ENCODE measurements at regions of chr7 and their contacts with region 1.

Region 1: GRCh38 chr7:83517035-83517700 is 131.8 kb downstream of the SEMA3E start:
- DNase-seq: no peak
- H3K4me3 ChIP-seq: no peak overlapping the region
- H3K27ac ChIP-seq: no peak overlapping the region
- H3K4me1 ChIP-seq: no peaks in the 10 kb centered on the region
- H3K27me3 ChIP-seq: no peaks in the 10 kb centered on the region
- CTCF ChIP-seq: no peak
- POLR2A ChIP-seq: no peak

Region 2: GRCh38 chr7:83655951-83656556 is 138.9 kb after region 1 on chr7:
- CTCF ChIA-PET with region 1: no interaction called
- POLR2A ChIA-PET with region 1: no interaction called
- dilution Hi-C with region 1: no loop called
- intact Hi-C with region 1: loop called (anchors 2 kb)
- DNase-seq: peak; percentile 64
- H3K4me3 ChIP-seq: no peak overlapping the region
- H3K27ac ChIP-seq: no peak overlapping the region
- H3K4me1 ChIP-seq: no peaks in the 10 kb centered on the region
- H3K27me3 ChIP-seq: peaks cover 10 to 14% of the 10 kb centered on the region in 2 experiments
- CTCF ChIP-seq: peak; percentile 52 to 64
- POLR2A ChIP-seq: no peak

Region 3: DNA sequence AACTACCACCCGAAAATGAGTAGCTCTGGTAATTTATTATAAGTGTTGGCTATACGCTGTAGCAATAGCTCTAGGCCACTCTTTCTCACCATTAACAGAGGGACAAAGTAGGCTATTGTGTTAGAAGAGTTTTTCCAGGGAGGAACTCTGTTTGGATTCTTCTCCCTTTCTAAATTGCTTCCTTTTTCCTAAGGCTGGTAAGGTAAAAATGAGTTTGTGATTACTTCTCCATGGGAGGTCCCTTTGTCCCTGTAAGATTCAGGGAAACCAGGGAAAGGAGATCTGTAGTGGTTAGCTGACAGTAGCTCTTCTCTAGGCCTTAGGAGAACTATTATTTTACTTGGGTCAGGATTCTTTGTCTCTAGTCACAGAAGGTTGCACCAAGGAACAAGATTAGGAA is 155.0 kb after region 1 on chr7:
- CTCF ChIA-PET with region 1: no interaction called
- POLR2A ChIA-PET with region 1: no interaction called
- dilution Hi-C with region 1: no loop called
- intact Hi-C with region 1: no loop called
- DNase-seq: no peak
- H3K4me3 ChIP-seq: no peak overlapping the region
- H3K27ac ChIP-seq: no peak overlapping the region
- H3K4me1 ChIP-seq: no peaks in the 10 kb centered on the region
- H3K27me3 ChIP-seq: no peaks in the 10 kb centered on the region
- CTCF ChIP-seq: no peak
- POLR2A ChIP-seq: no peak

Measured in endothelial cell of umbilical vein (primary cell).